Activated CD4-positive, alpha-beta T cell treated with anti-CD3 and anti-CD28 coated beads, Interleukin-2, amount 10 ng/mL, durations not matched to agents 24 days and 14 days (primary cell): ENCODE measurements at regions of chr4 and their contacts with region 1.

Region 1: GRCh38 chr4:10018818-10019461 is 2.4 kb downstream of the SLC2A9 start:
- DNase-seq: peak; percentile 99
- H3K4me3 Mint-ChIP-seq: peak overlapping the region; percentile 88
- H3K27ac Mint-ChIP-seq: peak overlapping the region; percentile 96
- H3K4me1 Mint-ChIP-seq: peaks cover 17% of the 10 kb centered on the region
- H3K27me3 Mint-ChIP-seq: no peaks in the 10 kb centered on the region

Region 2: GRCh38 chr4:9704551-9705332 is 314.2 kb before region 1 on chr4:
- intact Hi-C with region 1: loop called (anchors 1 kb)
- DNase-seq: no peak
- H3K4me3 Mint-ChIP-seq: no peak overlapping the region
- H3K27ac Mint-ChIP-seq: no peak overlapping the region
- H3K4me1 Mint-ChIP-seq: peaks cover 6% of the 10 kb centered on the region
- H3K27me3 Mint-ChIP-seq: peaks cover 2% of the 10 kb centered on the region

Region 3: DNA sequence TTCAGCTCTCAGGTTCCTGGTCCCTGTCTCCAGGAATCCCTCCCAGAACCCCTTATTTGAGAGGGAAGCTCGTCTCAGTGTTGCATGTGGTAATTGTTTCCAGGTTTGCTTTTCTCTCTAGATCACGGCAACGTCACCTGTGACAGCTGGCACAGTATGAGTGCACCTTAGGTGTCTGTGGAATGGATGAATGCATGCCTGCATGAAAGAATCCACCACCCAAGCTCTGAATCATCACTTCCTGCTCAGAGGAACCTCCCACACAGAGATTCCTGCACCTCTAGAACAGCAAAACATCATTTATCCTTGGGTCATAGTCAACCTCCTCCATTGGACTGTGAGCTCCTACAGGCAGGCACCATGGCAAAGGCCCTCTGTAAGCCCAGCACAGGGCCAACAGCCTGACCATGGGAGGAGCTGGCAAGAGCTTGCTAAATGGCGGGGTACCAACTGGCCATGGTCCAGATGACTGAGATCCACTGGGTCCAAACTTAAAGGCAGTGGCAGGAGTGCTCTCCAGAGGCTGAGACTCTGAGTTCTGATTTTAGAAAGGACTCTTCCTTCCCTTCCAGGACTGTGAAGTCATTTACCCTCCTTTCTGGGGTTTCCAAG is 113.9 kb before region 1 on chr4:
- intact Hi-C with region 1: loop called (anchors 10 kb)
- DNase-seq: no peak
- H3K4me3 Mint-ChIP-seq: no peak overlapping the region
- H3K27ac Mint-ChIP-seq: no peak overlapping the region
- H3K4me1 Mint-ChIP-seq: peaks cover 5% of the 10 kb centered on the region
- H3K27me3 Mint-ChIP-seq: no peaks in the 10 kb centered on the region

Region 4: DNA sequence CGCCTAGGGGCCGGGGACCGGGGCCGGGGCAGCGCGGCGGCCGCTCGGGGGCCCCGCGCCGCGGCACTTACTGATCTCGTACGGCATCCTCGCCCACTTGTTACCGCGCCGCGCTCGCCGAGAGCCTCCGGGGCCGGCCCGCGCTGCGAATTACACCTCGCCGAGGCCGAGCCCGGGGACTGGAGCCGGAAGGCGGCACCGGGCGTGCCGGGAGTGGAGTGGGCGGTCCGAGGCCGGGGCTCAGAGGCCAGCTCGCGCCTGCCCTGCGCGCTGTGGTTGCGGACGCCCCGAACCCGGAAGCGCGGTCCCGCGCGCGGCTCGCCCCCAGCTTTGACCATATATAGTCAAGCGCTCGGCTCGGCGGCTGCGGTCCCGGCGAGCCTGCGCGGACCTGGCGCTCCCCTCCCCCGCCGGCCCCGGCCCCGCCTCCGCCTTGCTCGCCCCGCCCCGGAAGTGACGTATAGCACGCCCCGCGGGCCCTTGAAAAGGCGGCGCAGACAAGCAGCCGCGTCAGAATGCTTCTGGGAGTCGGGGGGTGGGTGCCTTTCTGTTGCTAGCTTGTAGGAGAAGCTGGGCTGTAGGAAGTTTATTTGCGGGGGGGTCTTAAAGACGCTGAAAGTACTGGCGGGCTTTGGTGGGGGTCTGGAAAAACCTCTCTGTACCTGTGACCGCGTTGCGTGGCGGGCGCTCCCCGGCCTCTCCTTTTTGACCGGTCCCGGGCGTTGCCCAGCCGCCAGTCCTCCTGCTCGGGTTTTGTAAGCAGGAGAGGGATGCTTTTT is 97.8 kb after region 1 on chr4 and contains the start of gene WDR1:
- intact Hi-C with region 1: loop called (anchors 1 kb)
- DNase-seq: peak; percentile 97
- H3K4me3 Mint-ChIP-seq: peak within 1 kb of the TSS; percentile 98
- H3K27ac Mint-ChIP-seq: peak within 1 kb of the TSS; percentile 95
- H3K4me1 Mint-ChIP-seq: peaks cover 70% of the 10 kb centered on the region
- H3K27me3 Mint-ChIP-seq: no peaks in the 10 kb centered on the region
- total RNA-seq, gene WDR1: 369 and 376 TPM in 2 replicates

Region 5: GRCh38 chr4:10461091-10461849 is 442.3 kb after region 1 on chr4:
- intact Hi-C with region 1: loop called (anchors 5 kb)
- DNase-seq: peak; percentile 95
- H3K4me3 Mint-ChIP-seq: peak overlapping the region; percentile 84
- H3K27ac Mint-ChIP-seq: peak overlapping the region; percentile 22
- H3K4me1 Mint-ChIP-seq: peaks cover 30% of the 10 kb centered on the region
- H3K27me3 Mint-ChIP-seq: peaks cover 37% of the 10 kb centered on the region